CD4-positive, alpha-beta memory T cell (primary cell): ENCODE measurements at regions of chr4 and their contacts with region 1.

Region 1: DNA sequence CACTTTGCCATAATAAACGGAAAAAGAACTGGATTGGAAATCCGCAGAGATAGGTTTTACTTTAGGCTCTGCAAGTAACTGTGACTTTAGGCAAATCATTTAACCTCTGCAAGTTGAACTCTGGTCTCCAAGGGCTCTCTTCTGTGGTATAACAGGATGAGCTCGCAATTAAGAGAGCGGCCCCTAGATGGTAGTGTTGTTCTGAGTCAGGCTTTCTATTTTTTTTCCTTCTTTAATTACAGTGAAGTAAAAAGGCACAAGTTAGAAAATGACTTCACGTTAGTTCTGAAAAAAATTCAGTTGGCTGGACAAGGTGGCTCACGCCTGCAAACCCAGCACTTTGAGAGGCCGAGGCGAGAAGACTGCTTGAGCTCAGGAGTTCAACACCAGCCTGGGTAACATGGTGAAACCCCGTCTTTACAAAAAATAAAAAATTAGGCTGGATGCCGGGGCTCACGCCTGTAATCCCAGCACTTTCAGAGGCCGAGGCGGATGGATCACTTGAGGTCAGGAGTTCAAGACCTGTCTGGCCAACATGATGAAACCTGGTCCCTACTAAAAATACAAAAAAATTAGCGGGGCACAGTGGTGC is 18.0 kb downstream of the RPS3A start:
- DNase-seq: peak; percentile 37 to 49 (median 45)
- H3K4me3 ChIP-seq: no peak overlapping the region
- H3K4me3 Mint-ChIP-seq: no peak overlapping the region
- H3K27ac ChIP-seq: no peak overlapping the region
- H3K27ac Mint-ChIP-seq: no peak overlapping the region
- H3K4me1 ChIP-seq: no peaks in the 10 kb centered on the region
- H3K4me1 Mint-ChIP-seq: peaks cover 0 to 4% (median 2%) of the 10 kb centered on the region in 4 donors
- H3K27me3 ChIP-seq: no peaks in the 10 kb centered on the region
- H3K27me3 Mint-ChIP-seq: no peaks in the 10 kb centered on the region

Region 2: DNA sequence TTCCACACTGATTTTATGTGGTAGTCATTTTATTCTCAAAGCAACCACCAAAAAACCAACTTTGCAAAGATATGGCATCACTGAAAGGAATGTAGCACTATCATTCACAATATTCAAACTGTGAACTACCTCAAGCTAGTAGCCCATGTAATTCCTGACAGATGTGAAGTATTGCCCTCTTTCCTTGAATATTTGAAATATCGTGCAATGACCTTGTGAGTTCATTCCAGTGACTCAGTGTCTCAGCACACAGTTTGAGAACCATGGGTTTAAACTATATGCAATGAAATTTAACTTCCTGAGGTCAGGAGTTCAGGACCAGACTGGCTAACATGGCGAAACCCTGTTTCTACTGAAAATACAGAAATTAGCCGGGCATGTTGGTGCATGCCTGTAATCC is 1280.9 kb before region 1 on chr4:
- CTCF ChIA-PET with region 1: no interaction called
- POLR2A ChIA-PET with region 1: no interaction called
- intact Hi-C with region 1: no loop called
- DNase-seq: no peak
- H3K4me3 ChIP-seq: no peak overlapping the region
- H3K4me3 Mint-ChIP-seq: no peak overlapping the region
- H3K27ac ChIP-seq: no peak overlapping the region
- H3K27ac Mint-ChIP-seq: no peak overlapping the region
- H3K4me1 ChIP-seq: no peaks in the 10 kb centered on the region
- H3K4me1 Mint-ChIP-seq: no peaks in the 10 kb centered on the region
- H3K27me3 ChIP-seq: no peaks in the 10 kb centered on the region
- H3K27me3 Mint-ChIP-seq: peaks cover 0 to 1% of the 10 kb centered on the region in 2 donors

Region 3: DNA sequence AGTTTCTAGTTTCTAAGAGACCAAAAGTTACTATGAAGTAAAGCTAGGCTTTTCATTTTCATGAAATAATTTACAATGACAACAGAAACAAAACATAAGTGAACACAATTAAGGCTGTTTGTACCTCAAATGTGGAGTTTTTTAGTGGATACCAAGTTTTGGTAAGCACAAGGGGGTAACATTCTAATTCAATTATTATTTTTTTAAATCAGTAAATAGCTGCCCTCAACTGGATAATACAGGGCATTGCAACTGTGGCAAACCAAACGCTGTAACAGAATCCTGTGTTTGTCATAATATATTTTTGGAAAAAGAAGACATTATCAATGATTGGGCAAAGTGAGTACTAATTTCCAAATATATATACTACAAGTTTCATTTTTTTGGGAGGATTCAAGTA is 1268.1 kb after region 1 on chr4:
- CTCF ChIA-PET with region 1: no interaction called
- POLR2A ChIA-PET with region 1: no interaction called
- intact Hi-C with region 1: loop called (anchors 5 kb)
- DNase-seq: peak in 1 of 5 donors; percentile 20
- H3K4me3 ChIP-seq: no peak overlapping the region
- H3K4me3 Mint-ChIP-seq: no peak overlapping the region
- H3K27ac ChIP-seq: no peak overlapping the region
- H3K27ac Mint-ChIP-seq: no peak overlapping the region
- H3K4me1 ChIP-seq: peaks cover 11% of the 10 kb centered on the region
- H3K4me1 Mint-ChIP-seq: peaks cover 22 to 42% (median 27%) of the 10 kb centered on the region in 4 donors
- H3K27me3 ChIP-seq: no peaks in the 10 kb centered on the region
- H3K27me3 Mint-ChIP-seq: no peaks in the 10 kb centered on the region